ENCODE measurements at regions of chr17 and their contacts with region 1.

Region 1: DNA sequence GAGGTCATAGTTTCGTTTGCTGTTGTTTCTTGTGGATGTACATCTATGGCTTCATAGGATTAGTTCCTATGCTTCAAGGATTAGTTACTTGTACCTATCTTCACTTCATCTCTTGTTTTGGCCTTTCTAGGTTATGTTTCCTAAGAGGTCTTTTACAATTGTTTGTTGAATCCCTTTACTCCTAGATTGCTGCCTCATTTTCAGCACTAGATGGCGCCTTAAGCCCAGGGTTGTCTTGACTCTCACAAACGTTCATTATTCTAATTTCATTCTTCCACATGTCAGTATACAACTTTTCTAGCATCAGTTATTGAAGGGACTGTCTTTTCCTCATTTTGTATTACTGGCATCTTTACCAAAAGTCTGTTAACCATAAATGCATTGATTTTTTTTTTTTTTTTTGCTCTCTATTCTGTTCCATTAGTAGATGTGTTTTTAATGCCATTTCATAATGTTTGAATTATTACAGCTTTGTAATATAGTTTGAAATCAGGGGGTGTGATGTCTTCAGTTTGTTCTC is 45.0 kb upstream of the NACA2 start:
- DNase-seq: peak; percentile 52 to 78 (median 67)
- H3K4me3 ChIP-seq: no peak overlapping the region
- H3K27ac ChIP-seq: no peak overlapping the region
- H3K4me1 ChIP-seq: no peaks in the 10 kb centered on the region
- H3K27me3 ChIP-seq: no peaks in the 10 kb centered on the region

Region 2: DNA sequence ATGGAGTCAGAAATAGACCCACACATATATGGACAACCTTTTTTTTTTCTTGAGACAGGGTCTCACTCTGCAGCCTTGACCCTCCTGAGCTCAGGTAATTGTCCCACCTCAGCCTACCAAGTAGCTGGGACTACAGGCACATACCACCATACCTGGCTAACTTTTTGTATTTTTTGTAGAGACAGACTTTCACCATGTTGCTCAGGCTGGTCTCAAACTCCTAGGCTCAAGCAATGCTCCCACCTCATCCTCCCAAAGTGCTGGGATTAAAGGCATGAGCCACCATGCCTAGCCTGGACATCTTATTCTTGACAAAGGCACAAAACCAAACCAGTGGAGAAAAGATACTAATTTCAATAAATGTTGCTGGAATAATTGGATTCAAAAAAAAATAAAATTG is 30.3 kb before region 1 on chr17:
- CTCF ChIA-PET with region 1: no interaction called
- POLR2A ChIA-PET with region 1: no interaction called
- DNase-seq: no peak
- H3K4me3 ChIP-seq: no peak overlapping the region
- H3K27ac ChIP-seq: no peak overlapping the region
- H3K4me1 ChIP-seq: no peaks in the 10 kb centered on the region
- H3K27me3 ChIP-seq: peaks cover 0 to 4% (median 0%) of the 10 kb centered on the region in 5 experiments

Region 3: DNA sequence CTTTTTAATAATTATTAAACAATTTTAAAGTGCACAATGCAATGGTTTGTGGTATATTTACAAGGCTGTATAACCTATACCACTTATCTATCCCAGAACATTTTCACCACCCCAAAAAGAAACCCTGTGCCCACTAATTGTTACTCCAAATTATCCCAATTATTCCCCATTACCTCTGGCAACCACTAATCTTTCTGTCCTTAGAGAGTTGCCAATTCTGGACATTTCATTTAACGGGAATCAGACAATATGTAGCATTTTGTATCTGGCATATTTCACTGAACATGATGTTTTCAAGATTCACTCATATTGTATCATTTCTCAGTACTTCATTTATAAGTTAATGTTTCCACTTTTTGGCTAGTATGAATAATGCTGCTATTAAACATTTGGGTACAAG is 58.1 kb after region 1 on chr17:
- CTCF ChIA-PET with region 1: no interaction called
- POLR2A ChIA-PET with region 1: no interaction called
- DNase-seq: no peak
- H3K4me3 ChIP-seq: no peak overlapping the region
- H3K27ac ChIP-seq: no peak overlapping the region
- H3K4me1 ChIP-seq: no peaks in the 10 kb centered on the region
- H3K27me3 ChIP-seq: no peaks in the 10 kb centered on the region

Region 4: DNA sequence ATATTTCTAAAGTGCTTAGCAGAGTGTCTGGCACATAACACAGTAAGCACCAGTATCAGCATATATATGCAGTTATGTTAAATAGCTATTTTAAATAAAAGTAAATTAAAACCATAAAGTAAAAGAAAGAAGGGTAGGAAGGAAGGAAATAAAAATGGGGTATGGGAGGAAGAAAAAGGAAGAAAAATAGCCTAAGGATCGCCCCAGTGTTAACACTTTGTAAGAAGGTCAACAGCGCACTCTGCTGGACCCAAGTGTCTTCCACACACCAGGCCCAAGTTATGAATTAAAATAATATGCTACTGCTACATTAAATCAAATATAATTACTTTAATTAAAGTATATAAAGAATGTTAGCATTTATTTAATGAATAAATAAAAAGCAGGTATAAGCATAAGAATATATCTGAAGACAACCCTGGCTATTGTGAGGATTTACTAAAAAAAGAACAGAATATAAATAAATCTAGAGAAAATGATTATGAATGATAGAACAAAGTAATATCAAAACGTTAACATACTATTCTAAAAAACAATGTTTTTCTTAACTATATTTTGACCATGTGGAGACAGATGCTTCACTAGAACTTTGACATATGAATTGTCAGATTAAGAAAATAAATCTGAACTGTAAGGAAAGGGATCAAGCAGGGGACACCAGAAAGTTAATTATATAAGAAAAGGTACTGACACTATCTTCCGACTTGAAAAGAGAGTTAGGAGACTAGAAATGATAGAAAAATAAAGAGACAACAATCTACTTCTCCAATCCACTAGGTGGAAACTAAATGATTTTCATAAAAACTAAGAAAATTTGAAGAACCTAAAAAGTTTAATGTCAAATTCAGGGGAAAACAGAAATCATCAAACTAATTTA is 201.4 kb after region 1 on chr17:
- CTCF ChIA-PET with region 1: interaction called, 16 read pairs
- POLR2A ChIA-PET with region 1: no interaction called
- DNase-seq: peak; percentile 78 to 90 (median 80)
- H3K4me3 ChIP-seq: no peak overlapping the region
- H3K27ac ChIP-seq: no peak overlapping the region
- H3K4me1 ChIP-seq: no peaks in the 10 kb centered on the region
- H3K27me3 ChIP-seq: no peaks in the 10 kb centered on the region

Region 5: GRCh38 chr17:61842899-61843298 is 206.9 kb after region 1 on chr17:
- CTCF ChIA-PET with region 1: interaction called, 15 read pairs
- POLR2A ChIA-PET with region 1: no interaction called
- DNase-seq: no peak
- H3K4me3 ChIP-seq: no peak overlapping the region
- H3K27ac ChIP-seq: no peak overlapping the region
- H3K4me1 ChIP-seq: no peaks in the 10 kb centered on the region
- H3K27me3 ChIP-seq: no peaks in the 10 kb centered on the region

Measured in common myeloid progenitor, CD34-positive (primary cell).